Heart left ventricle (tissue), 16 donors: ENCODE measurements at regions of chr13 and their contacts with region 1.

Region 1: GRCh38 chr13:98576963-98577822 is at the start of gene STK24:
- DNase-seq: peak; percentile 74 to 88 (median 85)
- ATAC-seq: peak; percentile 58 to 87 (median 79)
- H3K4me3 ChIP-seq: peak within 1 kb of the TSS; percentile 74 to 99 (median 94)
- H3K27ac ChIP-seq: peak within 1 kb of the TSS; percentile 93 to 99 (median 97)
- H3K4me1 ChIP-seq: peaks cover 5 to 58% (median 36%) of the 10 kb centered on the region in 12 donors
- H3K27me3 ChIP-seq: no peaks in the 10 kb centered on the region
- CTCF ChIP-seq: peak in 1 of 12 donors; percentile 12
- POLR2A ChIP-seq: no peak
- total RNA-seq, gene STK24: 56.5 to 82.6 (median 63.0) TPM

Region 2: DNA sequence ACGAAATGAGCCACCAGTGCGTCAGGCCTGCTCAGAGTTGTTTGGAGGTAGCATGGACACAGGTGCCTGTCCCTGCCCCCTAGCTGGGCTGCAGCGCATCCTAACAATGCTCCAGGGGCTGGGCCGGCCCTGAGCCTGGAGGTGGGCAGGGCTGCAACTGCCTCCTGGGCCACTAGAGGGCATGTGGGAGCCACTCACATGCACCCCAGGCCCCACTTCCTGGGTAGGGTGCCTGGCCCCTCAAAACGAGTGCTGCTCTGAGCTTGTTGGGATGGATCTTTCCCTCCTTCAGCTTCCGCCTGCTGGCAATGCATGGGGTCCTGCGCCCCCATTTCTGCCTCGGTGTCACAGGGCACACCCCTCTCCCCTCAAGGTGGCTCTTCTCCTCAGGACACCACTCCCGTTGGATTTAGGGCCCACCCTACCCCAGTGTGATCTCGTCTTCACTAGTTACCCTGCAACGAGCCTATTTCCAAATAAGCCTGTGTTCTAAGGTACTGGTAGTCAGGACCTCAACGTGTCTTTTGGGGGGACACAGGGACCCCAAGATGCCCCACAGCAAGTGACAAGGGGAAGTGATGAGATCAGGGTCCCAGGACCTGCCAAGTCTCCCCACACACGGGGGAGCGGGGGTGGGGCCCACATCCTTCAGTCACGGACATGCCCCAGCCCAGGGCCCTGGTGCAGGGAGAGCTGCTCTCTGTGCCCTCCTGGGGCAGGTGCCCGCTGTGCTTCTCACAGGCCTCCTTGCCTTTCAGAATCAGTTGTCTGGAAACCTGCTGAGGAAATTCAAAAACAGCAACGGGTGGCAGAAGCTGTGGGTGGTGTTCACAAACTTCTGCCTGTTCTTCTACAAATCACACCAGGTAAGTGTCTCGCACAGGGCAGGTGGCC is 131.6 kb before region 1 on chr13:
- intact Hi-C with region 1: loop called in 7 of 10 experiments (anchors 5 to 10 kb)
- DNase-seq: peak; percentile 58 to 88 (median 67)
- ATAC-seq: peak; percentile 62 to 88 (median 80)
- H3K4me3 ChIP-seq: no peak overlapping the region
- H3K27ac ChIP-seq: peak overlapping the region in 4 of 12 donors; percentile 5 to 67 (median 16)
- H3K4me1 ChIP-seq: peaks cover 0 to 30% (median 17%) of the 10 kb centered on the region in 12 donors
- H3K27me3 ChIP-seq: no peaks in the 10 kb centered on the region
- CTCF ChIP-seq: peak; percentile 95 to 99 (median 98)
- POLR2A ChIP-seq: no peak

Region 3: GRCh38 chr13:98466634-98467236 is 110.5 kb before region 1 on chr13:
- intact Hi-C with region 1: loop called in 2 of 10 experiments (anchors 5 kb)
- DNase-seq: no peak
- ATAC-seq: peak in 1 of 4 donors; percentile 15
- H3K4me3 ChIP-seq: no peak overlapping the region
- H3K27ac ChIP-seq: peak overlapping the region in 8 of 12 donors; percentile 2 to 66 (median 46)
- H3K4me1 ChIP-seq: peaks cover 3 to 56% (median 29%) of the 10 kb centered on the region in 12 donors
- H3K27me3 ChIP-seq: no peaks in the 10 kb centered on the region
- CTCF ChIP-seq: peak; percentile 29 to 68 (median 57)
- POLR2A ChIP-seq: no peak

Region 4: GRCh38 chr13:98484289-98485219 is 92.6 kb before region 1 on chr13:
- intact Hi-C with region 1: loop called in 8 of 10 experiments (anchors 5 to 10 kb)
- DNase-seq: peak in 4 of 5 donors; percentile 61 to 80 (median 69)
- ATAC-seq: peak; percentile 27 to 68 (median 60)
- H3K4me3 ChIP-seq: peak overlapping the region in 3 of 12 donors; percentile 4 to 27 (median 12)
- H3K27ac ChIP-seq: peak overlapping the region in 11 of 12 donors; percentile 42 to 83 (median 73)
- H3K4me1 ChIP-seq: peaks cover 0 to 95% (median 85%) of the 10 kb centered on the region in 12 donors
- H3K27me3 ChIP-seq: no peaks in the 10 kb centered on the region
- CTCF ChIP-seq: no peak
- POLR2A ChIP-seq: no peak

Region 5: GRCh38 chr13:98521461-98522247 is 55.5 kb before region 1 on chr13:
- intact Hi-C with region 1: no loop called
- DNase-seq: no peak
- ATAC-seq: peak in 2 of 4 donors; percentile 20 to 38
- H3K4me3 ChIP-seq: no peak overlapping the region
- H3K27ac ChIP-seq: no peak overlapping the region
- H3K4me1 ChIP-seq: peaks cover 10 to 91% (median 63%) of the 10 kb centered on the region in 12 donors
- H3K27me3 ChIP-seq: no peaks in the 10 kb centered on the region
- CTCF ChIP-seq: no peak
- POLR2A ChIP-seq: no peak

Region 6: GRCh38 chr13:98542568-98543377 is 34.4 kb before region 1 on chr13:
- intact Hi-C with region 1: loop called in 1 of 10 experiments (anchors 5 kb)
- DNase-seq: no peak
- ATAC-seq: peak in 3 of 4 donors; percentile 9 to 16 (median 15)
- H3K4me3 ChIP-seq: peak overlapping the region in 9 of 12 donors; percentile 1 to 42 (median 29)
- H3K27ac ChIP-seq: peak overlapping the region in 10 of 12 donors; percentile 21 to 74 (median 49)
- H3K4me1 ChIP-seq: peaks cover 6 to 92% (median 63%) of the 10 kb centered on the region in 12 donors
- H3K27me3 ChIP-seq: no peaks in the 10 kb centered on the region
- CTCF ChIP-seq: no peak
- POLR2A ChIP-seq: no peak

Region 7: GRCh38 chr13:98648141-98648540 is 70.9 kb after region 1 on chr13:
- intact Hi-C with region 1: loop called in 2 of 10 experiments (anchors 5 kb)
- DNase-seq: no peak
- ATAC-seq: no peak
- H3K4me3 ChIP-seq: no peak overlapping the region
- H3K27ac ChIP-seq: no peak overlapping the region
- H3K4me1 ChIP-seq: peaks cover 0 to 6% (median 0%) of the 10 kb centered on the region in 12 donors
- H3K27me3 ChIP-seq: peaks cover 0 to 6% (median 0%) of the 10 kb centered on the region in 9 donors
- CTCF ChIP-seq: no peak
- POLR2A ChIP-seq: no peak